AG04450 (cell line): ENCODE measurements at regions of chr19 and their contacts with region 1.

Region 1: GRCh38 chr19:47152224-47153017 is 21.8 kb downstream of the SAE1 start:
- DNase-seq: no peak
- H3K4me3 ChIP-seq: no peak overlapping the region
- H3K27ac ChIP-seq: no peak overlapping the region
- H3K27me3 ChIP-seq: no peaks in the 10 kb centered on the region
- CTCF ChIP-seq: no peak

Region 2: DNA sequence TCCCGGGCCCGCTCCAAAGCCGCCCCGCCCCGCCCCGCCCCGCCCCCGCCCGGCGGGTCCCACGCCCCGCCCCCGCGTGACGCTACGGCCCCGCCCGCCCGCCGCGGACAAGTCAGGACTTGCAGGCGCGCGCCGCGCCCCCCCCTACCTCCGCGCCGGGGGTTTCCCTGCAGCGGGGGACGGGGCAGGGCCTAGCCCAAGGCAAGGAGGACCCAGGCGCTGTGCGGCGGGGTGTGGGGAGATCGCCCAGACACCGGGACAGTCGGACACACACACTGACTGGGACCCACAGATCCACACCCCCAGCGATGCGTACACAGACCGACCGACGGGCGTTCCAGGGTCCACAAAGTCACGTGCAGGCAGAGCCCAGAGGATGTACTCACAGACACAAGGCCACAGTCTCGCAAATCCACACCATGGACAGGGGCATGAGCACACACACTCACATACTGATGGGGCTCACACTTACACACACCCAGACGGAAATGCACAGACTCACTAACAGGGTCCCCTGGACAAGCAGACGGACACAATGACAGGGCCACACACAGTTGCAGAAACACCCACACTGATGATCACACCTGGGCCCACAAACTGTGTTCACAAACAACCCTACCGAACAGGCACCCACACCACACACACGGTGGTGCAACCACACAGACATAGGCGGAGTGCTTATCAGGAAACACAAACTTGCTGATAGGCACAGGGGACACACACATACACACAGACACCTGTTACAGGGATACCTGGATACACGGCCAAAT is 79.0 kb after region 1 on chr19:
- CTCF ChIA-PET with region 1: interaction called, 11 read pairs
- POLR2A ChIA-PET with region 1: interaction called, 14 read pairs
- DNase-seq: peak; percentile 72
- H3K4me3 ChIP-seq: peak overlapping the region; percentile 98
- H3K27ac ChIP-seq: peak overlapping the region; percentile 84
- H3K27me3 ChIP-seq: no peaks in the 10 kb centered on the region
- CTCF ChIP-seq: no peak